MCF 10A (cell line): ENCODE measurements at regions of chr21 and their contacts with region 1.

Region 1: DNA sequence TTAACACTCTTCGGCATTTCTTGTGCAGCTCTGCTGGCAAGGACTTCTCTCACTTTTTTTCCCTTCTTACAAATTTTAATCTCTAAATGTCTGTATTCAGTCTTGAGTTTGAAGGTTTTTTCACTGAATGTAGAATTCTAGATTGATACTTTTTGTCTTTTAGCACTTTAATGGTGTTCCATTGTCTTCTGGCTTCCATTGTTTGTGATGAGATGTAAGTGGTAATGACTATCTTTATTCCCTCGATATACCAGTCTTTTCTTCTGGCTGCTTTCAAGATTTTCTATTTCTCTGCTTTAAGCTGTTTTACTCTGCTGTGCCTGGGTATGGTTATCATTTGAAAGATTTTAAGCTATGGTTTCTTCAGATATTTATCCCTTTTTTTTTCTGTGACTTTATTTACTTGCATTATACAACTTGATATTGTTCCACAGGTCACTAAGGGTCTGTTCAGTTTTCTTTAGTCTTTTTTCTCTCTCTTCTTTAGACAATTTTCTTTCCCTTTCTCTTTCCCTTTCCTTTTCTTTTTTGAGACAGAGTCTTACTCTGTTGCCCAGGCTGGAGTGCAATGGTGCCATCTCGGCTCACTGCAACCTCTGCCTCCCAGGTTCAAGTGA is 35.8 kb downstream of the DYRK1A start:
- DNase-seq: no peak
- H3K4me3 Mint-ChIP-seq: no peak overlapping the region
- H3K27ac Mint-ChIP-seq: no peak overlapping the region
- H3K4me1 Mint-ChIP-seq: peaks cover 19% of the 10 kb centered on the region
- H3K27me3 Mint-ChIP-seq: no peaks in the 10 kb centered on the region
- CTCF ChIP-seq: no peak

Region 2: DNA sequence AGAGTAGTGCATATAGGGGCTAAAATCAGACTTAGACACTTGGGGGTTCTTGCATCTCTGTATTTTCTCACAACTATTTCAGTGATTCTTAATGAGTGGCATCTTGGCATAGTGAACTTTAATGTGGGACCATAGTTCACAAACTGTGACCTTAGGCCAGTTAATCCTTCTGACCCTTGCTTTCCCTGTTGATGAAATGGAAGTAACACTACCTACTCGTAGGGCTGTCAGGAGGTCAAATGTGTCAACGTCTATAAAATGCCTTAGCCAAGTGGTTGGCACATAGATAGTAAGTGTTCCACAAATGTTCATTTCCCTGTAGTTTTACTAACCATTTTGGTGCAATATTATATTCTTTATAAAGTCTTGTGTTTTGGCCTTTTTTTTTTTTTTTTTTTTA is 13.6 kb after region 1 on chr21:
- CTCF ChIA-PET with region 1: no interaction called
- POLR2A ChIA-PET with region 1: interaction called, 11 read pairs
- intact Hi-C with region 1: no loop called
- DNase-seq: peak; percentile 13
- H3K4me3 Mint-ChIP-seq: no peak overlapping the region
- H3K27ac Mint-ChIP-seq: no peak overlapping the region
- H3K4me1 Mint-ChIP-seq: peaks cover 27% of the 10 kb centered on the region
- H3K27me3 Mint-ChIP-seq: no peaks in the 10 kb centered on the region
- CTCF ChIP-seq: no peak